PC-3 (cell line): ENCODE measurements at regions of chrX and their contacts with region 1.

Region 1: DNA sequence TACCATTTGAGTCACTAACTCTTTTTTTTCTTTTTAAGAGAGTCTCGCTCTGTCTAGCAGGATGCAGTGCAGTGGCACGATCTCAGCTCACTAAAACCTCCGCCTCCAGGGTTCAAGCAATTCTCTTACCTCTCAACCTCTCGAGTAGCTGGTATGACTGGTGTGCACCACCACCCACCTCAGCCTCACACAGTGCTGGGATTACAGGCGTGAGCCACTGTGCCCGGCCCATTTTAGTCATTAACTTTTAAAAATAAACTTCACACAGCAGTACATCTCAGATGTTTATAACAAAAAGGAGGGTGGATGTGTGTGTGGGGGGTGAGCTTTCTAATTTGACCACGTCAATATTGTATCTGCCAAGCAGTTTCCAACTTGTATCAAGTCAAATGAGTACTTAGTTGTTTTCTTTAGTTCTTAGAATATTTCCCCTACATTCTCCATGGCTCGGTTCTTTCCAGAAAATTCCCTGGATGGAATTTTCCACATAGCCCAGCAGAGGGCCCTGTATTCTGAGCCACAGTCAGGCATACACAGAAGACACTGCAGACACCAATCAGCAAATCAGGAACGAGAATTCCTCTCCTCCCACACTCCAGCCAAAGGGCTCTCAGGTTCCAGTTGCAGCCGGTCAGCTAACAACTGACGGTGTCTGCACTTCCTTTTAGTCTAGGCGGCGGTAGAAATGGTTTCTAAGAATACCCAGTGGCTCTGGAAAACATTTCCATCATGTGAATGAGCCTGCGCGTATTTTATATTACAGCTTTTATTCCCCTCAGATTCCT is 20.1 kb upstream of the ARAF start:
- DNase-seq: peak; percentile 89
- ATAC-seq: peak; percentile 100
- H3K4me3 ChIP-seq: no peak overlapping the region
- H3K27ac ChIP-seq: no peak overlapping the region
- H3K4me1 ChIP-seq: peaks cover 4% of the 10 kb centered on the region; the same call in 1 of the 2 replicates
- H3K27me3 ChIP-seq: no peaks in the 10 kb centered on the region
- CTCF ChIP-seq: peak; percentile 72

Region 2: DNA sequence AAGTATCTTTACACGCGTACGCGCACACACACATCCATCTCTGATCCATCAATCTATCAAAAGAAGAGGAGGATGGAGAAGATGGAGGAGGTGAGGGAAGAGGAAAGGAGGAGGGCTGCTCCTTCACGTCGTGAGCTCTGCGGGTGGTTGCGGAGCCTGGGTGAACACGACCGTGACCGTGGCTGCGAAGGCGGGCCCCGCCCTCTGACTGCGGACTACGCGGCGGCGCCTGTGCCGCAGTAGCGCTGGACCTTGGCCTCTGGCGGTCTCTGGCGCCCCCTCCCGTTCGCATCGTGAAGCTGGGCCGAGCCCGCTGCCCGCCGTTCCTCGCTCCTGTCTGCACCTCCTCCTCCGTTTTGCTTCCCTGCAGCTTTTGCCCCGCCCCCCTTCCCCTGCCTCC is 17.6 kb before region 1 on chrX:
- CTCF ChIA-PET with region 1: no interaction called
- POLR2A ChIA-PET with region 1: no interaction called
- intact Hi-C with region 1: no loop called
- DNase-seq: peak; percentile 81
- ATAC-seq: peak; percentile 97
- H3K4me3 ChIP-seq: peak overlapping the region; percentile 72
- H3K27ac ChIP-seq: no peak overlapping the region
- H3K4me1 ChIP-seq: peaks cover 3% of the 10 kb centered on the region; the same call in 1 of the 2 replicates
- H3K27me3 ChIP-seq: no peaks in the 10 kb centered on the region
- CTCF ChIP-seq: peak; percentile 70

Region 3: GRCh38 chrX:47628980-47629379 is 88.0 kb after region 1 on chrX:
- CTCF ChIA-PET with region 1: no interaction called
- POLR2A ChIA-PET with region 1: no interaction called
- intact Hi-C with region 1: loop called (anchors 1 kb)
- DNase-seq: peak; percentile 44
- ATAC-seq: peak; percentile 50; the same call in 1 of the 2 replicates
- H3K4me3 ChIP-seq: no peak overlapping the region
- H3K27ac ChIP-seq: no peak overlapping the region
- H3K4me1 ChIP-seq: no peaks in the 10 kb centered on the region
- H3K27me3 ChIP-seq: no peaks in the 10 kb centered on the region
- CTCF ChIP-seq: peak; percentile 49

Region 4: GRCh38 chrX:47644557-47645091 is 103.7 kb after region 1 on chrX:
- CTCF ChIA-PET with region 1: no interaction called
- POLR2A ChIA-PET with region 1: no interaction called
- intact Hi-C with region 1: loop called (anchors 1 kb)
- DNase-seq: peak; percentile 17
- ATAC-seq: no peak
- H3K4me3 ChIP-seq: no peak overlapping the region
- H3K27ac ChIP-seq: no peak overlapping the region
- H3K4me1 ChIP-seq: peaks cover 13% of the 10 kb centered on the region
- H3K27me3 ChIP-seq: no peaks in the 10 kb centered on the region
- CTCF ChIP-seq: peak; percentile 44; the same call in 1 of the 2 replicates

Region 5: GRCh38 chrX:47776292-47777006 is 235.5 kb after region 1 on chrX:
- CTCF ChIA-PET with region 1: no interaction called
- POLR2A ChIA-PET with region 1: no interaction called
- intact Hi-C with region 1: no loop called
- DNase-seq: no peak
- ATAC-seq: no peak
- H3K4me3 ChIP-seq: no peak overlapping the region
- H3K27ac ChIP-seq: no peak overlapping the region
- H3K4me1 ChIP-seq: no peaks in the 10 kb centered on the region
- H3K27me3 ChIP-seq: peaks cover 5% of the 10 kb centered on the region; the same call in 1 of the 2 replicates
- CTCF ChIP-seq: no peak

Region 6: DNA sequence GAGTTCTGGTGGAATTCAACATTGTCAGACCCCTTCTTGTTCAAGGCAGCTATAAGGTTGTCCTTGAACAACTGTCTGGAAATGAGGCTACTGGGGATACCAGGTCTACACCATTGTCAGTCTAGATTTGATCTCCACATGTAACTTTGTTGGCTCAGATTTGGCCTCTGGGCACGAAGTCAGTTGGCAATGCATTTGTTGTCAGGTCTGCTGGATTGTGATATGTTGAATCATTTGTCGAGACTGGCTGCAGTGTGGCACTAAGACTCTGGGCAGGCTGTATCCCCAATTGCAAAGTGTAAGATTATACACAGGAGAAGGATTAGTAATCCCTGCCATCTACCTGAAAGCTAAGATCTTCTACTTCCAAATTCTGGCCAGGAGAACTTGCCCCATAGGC is 322.2 kb after region 1 on chrX:
- CTCF ChIA-PET with region 1: no interaction called
- POLR2A ChIA-PET with region 1: no interaction called
- intact Hi-C with region 1: no loop called
- DNase-seq: no peak
- ATAC-seq: no peak
- H3K4me3 ChIP-seq: no peak overlapping the region
- H3K27ac ChIP-seq: no peak overlapping the region
- H3K4me1 ChIP-seq: no peaks in the 10 kb centered on the region
- H3K27me3 ChIP-seq: no peaks in the 10 kb centered on the region
- CTCF ChIP-seq: no peak

Region 7: DNA sequence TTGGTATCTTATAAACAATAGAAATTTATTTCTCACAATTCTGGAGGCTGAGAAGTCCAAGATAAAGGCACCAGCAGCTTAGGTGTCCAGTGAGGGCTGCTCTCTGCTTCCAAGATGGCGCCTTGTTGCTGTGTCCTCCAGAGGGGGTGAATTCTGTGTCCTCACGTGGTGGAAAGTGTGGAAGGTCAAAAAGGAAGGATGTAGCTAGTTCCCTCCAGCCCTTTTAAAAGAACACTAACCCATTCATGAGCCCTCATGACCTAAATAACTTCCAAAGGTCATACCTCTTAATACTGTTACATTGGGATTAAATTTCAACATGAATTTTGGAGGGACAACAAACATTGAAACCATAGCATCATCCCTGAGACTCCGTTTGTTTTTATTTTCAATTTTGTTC is 344.6 kb after region 1 on chrX:
- CTCF ChIA-PET with region 1: no interaction called
- POLR2A ChIA-PET with region 1: no interaction called
- intact Hi-C with region 1: no loop called
- DNase-seq: no peak
- ATAC-seq: no peak
- H3K4me3 ChIP-seq: no peak overlapping the region
- H3K27ac ChIP-seq: no peak overlapping the region
- H3K4me1 ChIP-seq: no peaks in the 10 kb centered on the region
- H3K27me3 ChIP-seq: no peaks in the 10 kb centered on the region
- CTCF ChIP-seq: no peak